ENCODE measurements at regions of chr17 and their contacts with region 1.

Region 1: GRCh38 chr17:27455914-27456680 is at the start of gene KSR1:
- DNase-seq: peak; percentile 86
- H3K4me3 Mint-ChIP-seq: peak within 1 kb of the TSS; percentile 93
- H3K27ac Mint-ChIP-seq: peak within 1 kb of the TSS; percentile 86
- H3K4me1 Mint-ChIP-seq: peaks cover 42% of the 10 kb centered on the region
- H3K27me3 Mint-ChIP-seq: no peaks in the 10 kb centered on the region
- total RNA-seq, gene KSR1: 179 to 189 TPM

Region 2: DNA sequence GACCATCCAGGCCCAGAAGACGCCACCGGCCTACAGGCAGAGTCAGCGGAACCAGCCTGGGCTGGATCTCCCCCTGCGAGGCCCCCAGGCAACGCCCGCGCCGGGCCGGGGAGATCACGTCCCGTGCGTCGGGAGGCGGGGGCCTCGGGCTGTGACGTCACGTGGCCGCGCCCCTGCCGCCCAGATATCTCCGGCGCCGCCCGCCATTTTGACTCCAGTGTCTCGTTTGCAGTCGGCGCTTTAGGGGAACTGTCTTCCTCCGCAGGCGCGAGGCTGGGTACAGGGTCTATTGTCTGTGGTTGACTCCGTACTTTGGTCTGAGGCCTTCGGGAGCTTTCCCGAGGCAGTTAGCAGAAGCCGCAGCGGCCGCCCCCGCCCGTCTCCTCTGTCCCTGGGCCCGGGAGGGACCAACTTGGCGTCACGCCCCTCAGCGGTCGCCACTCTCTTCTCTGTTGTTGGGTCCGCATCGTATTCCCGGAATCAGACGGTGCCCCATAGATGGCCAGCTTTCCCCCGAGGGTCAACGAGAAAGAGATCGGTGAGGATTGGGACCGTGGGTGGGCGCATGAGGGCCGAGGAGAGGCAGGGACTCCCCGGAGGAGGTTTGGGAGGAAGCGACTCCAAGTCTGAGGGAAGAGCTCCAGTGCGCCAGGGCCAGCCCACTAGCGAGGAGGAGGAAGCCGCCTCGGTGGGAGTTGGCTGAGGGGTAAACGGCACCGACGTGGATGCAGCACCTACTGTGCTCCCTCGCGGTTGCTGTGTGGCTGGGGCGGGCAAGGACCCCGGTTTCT is 162.0 kb before region 1 on chr17 and contains the start of gene WSB1:
- CTCF ChIA-PET with region 1: no interaction called
- intact Hi-C with region 1: loop called (anchors 1 kb)
- DNase-seq: peak; percentile 91
- H3K4me3 Mint-ChIP-seq: peak within 1 kb of the TSS; percentile 96
- H3K27ac Mint-ChIP-seq: peak within 1 kb of the TSS; percentile 99
- H3K4me1 Mint-ChIP-seq: peaks cover 36% of the 10 kb centered on the region
- H3K27me3 Mint-ChIP-seq: no peaks in the 10 kb centered on the region
- total RNA-seq, gene WSB1: 112 to 118 TPM

Region 3: DNA sequence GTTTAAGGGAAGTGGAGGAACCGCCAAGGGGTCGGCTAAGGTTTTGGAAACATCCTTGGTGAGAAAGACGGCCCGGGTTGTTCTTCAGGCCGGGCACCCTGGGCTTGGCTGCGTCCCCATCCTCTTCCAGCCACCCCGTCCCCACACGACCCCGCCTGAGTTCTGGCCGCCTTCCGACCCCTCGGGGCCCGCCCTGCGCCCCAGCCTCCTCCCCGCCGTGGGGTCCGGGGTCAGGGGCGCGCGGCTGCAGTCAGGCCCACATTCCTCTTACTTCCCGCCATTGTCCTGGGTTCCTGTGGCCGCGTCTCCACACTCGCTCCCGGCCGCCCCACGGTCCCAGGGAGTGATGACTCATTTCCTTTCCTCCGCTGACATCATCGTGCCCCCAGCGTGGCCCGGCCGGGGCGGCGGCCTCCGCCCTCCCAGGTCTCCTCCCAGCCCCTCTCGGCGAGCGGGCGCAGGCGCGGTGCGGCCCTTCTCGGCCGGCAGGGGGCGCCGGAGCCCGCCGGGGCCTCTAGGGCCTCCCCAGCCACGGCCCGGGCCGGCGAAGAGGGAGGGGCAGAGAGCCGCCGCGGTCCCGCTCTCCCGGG is 102.5 kb before region 1 on chr17:
- CTCF ChIA-PET with region 1: no interaction called
- intact Hi-C with region 1: loop called (anchors 2 kb)
- DNase-seq: peak; percentile 86
- H3K4me3 Mint-ChIP-seq: peak overlapping the region; percentile 89
- H3K27ac Mint-ChIP-seq: peak overlapping the region; percentile 93
- H3K4me1 Mint-ChIP-seq: peaks cover 23% of the 10 kb centered on the region
- H3K27me3 Mint-ChIP-seq: no peaks in the 10 kb centered on the region

Region 4: DNA sequence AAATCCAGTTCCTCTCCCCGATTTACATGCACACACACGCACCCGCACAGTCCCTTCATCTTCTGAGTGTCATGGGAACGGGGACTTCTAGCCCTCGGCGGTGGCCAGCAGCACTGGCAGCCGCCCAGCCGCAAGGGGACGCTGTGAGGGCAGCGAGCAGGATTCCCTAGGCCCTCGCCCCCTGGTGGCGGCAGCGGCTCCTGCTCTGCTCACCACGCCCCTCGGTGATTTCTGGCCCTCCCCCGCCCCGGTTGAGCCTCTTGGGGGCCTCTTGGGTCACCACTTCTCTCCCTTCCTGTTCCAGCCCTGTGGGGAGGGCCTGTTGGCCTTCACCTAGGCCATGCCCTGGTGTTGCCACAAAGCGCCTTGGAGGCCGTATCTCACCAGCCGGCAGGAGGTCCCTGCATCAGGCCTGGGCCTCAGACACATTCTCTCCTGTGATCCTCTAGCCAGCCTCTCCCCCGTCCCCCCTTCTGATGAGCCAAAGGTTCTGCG is 75.0 kb before region 1 on chr17:
- CTCF ChIA-PET with region 1: interaction called, 4 read pairs
- intact Hi-C with region 1: loop called (anchors 1 kb)
- DNase-seq: peak; percentile 87
- H3K4me3 Mint-ChIP-seq: no peak overlapping the region
- H3K27ac Mint-ChIP-seq: no peak overlapping the region
- H3K4me1 Mint-ChIP-seq: no peaks in the 10 kb centered on the region
- H3K27me3 Mint-ChIP-seq: peaks cover 24% of the 10 kb centered on the region

Region 5: GRCh38 chr17:27466743-27467375 is 10.8 kb after region 1 on chr17:
- CTCF ChIA-PET with region 1: interaction called, 18 read pairs
- intact Hi-C with region 1: loop called (anchors 1 kb)
- DNase-seq: peak; percentile 94
- H3K4me3 Mint-ChIP-seq: peak overlapping the region; percentile 67
- H3K27ac Mint-ChIP-seq: peak overlapping the region; percentile 98
- H3K4me1 Mint-ChIP-seq: peaks cover 88% of the 10 kb centered on the region
- H3K27me3 Mint-ChIP-seq: no peaks in the 10 kb centered on the region

Region 6: DNA sequence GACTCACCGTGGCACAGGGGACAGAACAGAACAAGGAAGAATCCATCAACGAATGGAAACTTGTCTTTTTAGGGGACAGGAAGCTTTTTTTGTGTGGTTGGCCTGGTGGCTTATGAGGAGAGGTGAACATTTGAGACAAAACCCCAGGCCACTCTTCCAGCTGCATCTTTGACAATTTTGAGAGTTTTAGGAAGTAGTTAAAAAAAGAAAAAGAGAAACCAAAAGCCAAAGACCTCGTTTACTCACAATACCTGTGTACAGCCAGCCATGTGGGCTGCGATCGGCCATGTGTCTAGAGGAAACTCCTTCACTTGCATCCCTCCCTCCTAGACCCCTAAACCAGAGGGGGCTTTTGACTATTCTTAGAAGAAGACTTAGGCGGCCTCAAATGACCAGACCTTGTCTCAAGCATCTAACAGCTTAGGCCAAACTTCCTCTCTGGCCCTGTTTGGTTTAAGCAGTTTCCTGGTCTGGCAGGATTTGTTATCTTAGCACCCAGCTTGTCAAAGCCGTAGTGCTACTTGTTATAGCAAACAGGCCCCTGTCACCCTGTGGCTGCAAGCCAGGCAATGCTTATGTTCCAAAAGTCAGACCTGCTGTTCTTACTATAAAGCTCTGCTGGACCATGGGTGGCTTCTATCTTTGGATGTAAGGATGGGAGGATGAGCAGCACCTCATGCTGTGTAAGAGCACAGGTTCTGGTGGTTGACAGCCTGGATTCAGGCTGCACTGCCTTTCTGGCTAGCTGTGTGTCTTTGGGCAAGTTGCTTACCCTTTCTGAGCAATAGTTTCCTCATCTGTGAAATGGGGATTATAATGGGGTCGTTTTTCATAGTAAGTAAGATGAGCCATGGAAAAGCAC is 17.9 kb after region 1 on chr17:
- CTCF ChIA-PET with region 1: interaction called, 14 read pairs
- intact Hi-C with region 1: loop called (anchors 1 kb)
- DNase-seq: peak; percentile 94
- H3K4me3 Mint-ChIP-seq: peak overlapping the region; percentile 45
- H3K27ac Mint-ChIP-seq: peak overlapping the region; percentile 97
- H3K4me1 Mint-ChIP-seq: peaks cover 93% of the 10 kb centered on the region
- H3K27me3 Mint-ChIP-seq: no peaks in the 10 kb centered on the region

Region 7: DNA sequence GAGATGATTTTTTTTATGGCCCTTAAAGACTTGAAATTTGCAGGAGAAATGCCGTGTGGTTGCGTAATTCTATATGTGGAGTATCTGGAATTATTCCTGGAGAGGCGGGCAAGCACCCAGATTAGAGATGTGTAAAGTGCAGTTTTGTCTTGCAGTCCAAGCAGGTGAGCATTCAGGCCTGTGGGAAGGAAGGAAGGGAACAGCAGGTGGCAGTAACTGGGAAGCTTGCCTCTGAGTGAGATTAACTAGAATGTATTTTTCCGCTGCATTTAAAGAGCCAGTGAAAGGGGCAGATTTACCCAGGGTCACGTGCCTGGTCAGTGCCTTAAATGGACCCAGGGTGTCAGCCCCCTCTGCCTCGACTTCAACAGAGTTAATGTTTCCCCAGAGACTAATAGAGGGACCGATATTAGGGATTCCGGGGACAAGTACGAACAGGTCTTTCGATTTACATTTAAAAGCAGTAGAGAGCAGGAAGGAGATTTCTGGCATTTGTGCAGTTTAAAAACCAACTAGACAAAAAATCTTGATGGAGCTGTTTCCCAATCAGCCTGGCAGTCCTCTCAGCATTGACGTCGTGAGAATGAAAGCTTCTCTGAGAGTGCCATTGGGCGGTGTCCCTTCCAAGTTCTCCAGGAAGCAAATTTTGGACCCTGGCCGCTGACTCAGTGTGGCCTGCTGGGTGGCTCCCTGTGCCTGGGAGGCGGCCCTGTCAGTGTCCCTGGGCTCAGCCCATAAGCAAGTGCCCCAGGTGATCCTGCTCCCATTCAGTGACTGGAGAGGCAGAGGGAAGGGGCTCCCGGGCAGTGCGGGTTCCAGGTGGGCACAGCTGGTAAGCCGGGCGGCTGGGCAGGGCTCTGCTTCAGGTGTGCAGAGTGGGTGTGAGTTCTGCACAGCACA is 38.3 kb after region 1 on chr17:
- CTCF ChIA-PET with region 1: no interaction called
- intact Hi-C with region 1: no loop called
- DNase-seq: no peak
- H3K4me3 Mint-ChIP-seq: no peak overlapping the region
- H3K27ac Mint-ChIP-seq: no peak overlapping the region
- H3K4me1 Mint-ChIP-seq: peaks cover 40% of the 10 kb centered on the region
- H3K27me3 Mint-ChIP-seq: no peaks in the 10 kb centered on the region

Region 8: GRCh38 chr17:27578718-27579085 is 122.6 kb after region 1 on chr17:
- CTCF ChIA-PET with region 1: interaction called, 5 read pairs
- intact Hi-C with region 1: loop called (anchors 1 kb)
- DNase-seq: peak; percentile 93
- H3K4me3 Mint-ChIP-seq: no peak overlapping the region
- H3K27ac Mint-ChIP-seq: peak overlapping the region; percentile 93
- H3K4me1 Mint-ChIP-seq: peaks cover 67% of the 10 kb centered on the region
- H3K27me3 Mint-ChIP-seq: no peaks in the 10 kb centered on the region